ENCODE measurements at regions of chr17 and their contacts with region 1.

Region 1: DNA sequence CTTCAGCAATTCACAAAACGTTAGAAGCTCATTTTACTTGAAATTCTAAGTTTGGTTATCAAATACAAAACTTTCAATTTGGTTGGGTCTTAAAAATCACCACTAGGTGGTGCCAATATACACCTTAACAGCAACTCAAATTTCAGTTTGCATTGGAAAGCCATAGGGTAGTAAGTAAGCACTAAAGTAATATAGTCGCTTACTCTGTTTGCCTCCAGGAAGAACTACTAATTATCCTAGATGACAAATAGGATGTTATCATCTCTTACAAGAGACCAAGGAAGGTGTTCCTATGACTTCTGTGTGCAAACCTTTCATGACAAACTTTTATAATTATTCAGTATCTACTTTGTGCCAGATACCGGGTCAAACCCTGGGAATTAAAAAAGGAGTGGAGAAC is 93.3 kb downstream of the MYO1D start:
- DNase-seq: no peak
- H3K4me3 ChIP-seq: no peak overlapping the region
- H3K27ac ChIP-seq: peak overlapping the region; percentile 27 to 35
- H3K4me1 ChIP-seq: peaks cover 0 to 7% of the 10 kb centered on the region in 2 donors
- H3K27me3 ChIP-seq: no peaks in the 10 kb centered on the region
- CTCF ChIP-seq: peak; percentile 65 to 73 (median 67)

Region 2: GRCh38 chr17:31935512-31935911 is 848.1 kb before region 1 on chr17:
- intact Hi-C with region 1: no loop called
- DNase-seq: no peak
- H3K4me3 ChIP-seq: no peak overlapping the region
- H3K27ac ChIP-seq: no peak overlapping the region
- H3K4me1 ChIP-seq: peaks cover 0 to 12% of the 10 kb centered on the region in 2 donors
- H3K27me3 ChIP-seq: no peaks in the 10 kb centered on the region
- CTCF ChIP-seq: no peak

Region 3: GRCh38 chr17:32807577-32807976 is 24.0 kb after region 1 on chr17:
- intact Hi-C with region 1: no loop called
- DNase-seq: no peak
- H3K4me3 ChIP-seq: no peak overlapping the region
- H3K27ac ChIP-seq: peak overlapping the region in 1 of 2 donors; percentile 16
- H3K4me1 ChIP-seq: peaks cover 8 to 34% of the 10 kb centered on the region in 2 donors
- H3K27me3 ChIP-seq: no peaks in the 10 kb centered on the region
- CTCF ChIP-seq: no peak

Region 4: GRCh38 chr17:32822996-32823395 is 39.4 kb after region 1 on chr17:
- intact Hi-C with region 1: loop called (anchors 5 kb)
- DNase-seq: no peak
- H3K4me3 ChIP-seq: peak overlapping the region; percentile 51 to 64
- H3K27ac ChIP-seq: peak overlapping the region; percentile 77 to 84
- H3K4me1 ChIP-seq: peaks cover 0 to 55% of the 10 kb centered on the region in 2 donors
- H3K27me3 ChIP-seq: no peaks in the 10 kb centered on the region
- CTCF ChIP-seq: no peak

Region 5: GRCh38 chr17:32909787-32910369 is 126.3 kb after region 1 on chr17:
- intact Hi-C with region 1: loop called (anchors 1 kb)
- DNase-seq: peak in 1 of 2 donors; percentile 93
- H3K4me3 ChIP-seq: no peak overlapping the region
- H3K27ac ChIP-seq: peak overlapping the region in 1 of 2 donors; percentile 13
- H3K4me1 ChIP-seq: peaks cover 0 to 12% of the 10 kb centered on the region in 2 donors
- H3K27me3 ChIP-seq: no peaks in the 10 kb centered on the region
- CTCF ChIP-seq: peak; percentile 66 to 86 (median 79)

Region 6: DNA sequence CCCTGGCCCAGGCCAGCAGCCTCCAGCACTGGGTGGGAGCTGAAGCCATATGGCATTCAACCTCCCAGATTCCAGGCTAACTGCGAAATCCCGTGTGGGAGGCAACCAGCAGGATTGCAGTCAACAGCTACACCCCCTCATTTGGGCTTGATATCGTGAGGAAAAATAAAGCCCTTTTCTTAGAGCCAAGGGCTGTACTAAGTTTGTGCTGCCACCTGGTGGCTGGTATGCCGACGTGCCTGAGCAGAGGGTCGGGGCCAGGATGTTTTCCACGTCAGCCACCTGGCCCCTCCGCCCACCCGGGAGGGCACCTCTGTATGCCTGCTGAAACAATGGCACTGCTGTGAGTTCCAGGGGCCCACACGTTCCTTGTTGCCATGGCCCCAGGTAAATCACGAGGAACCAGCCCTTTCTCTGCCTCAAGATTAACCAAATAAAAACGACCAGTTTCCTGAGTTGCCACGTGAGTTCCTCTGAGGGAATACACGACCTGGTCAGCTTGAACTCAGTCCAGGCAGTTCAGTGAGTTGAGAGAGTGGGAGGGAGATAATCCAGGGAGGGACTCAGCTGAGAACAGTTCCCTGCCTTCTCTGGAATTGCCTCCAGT is 153.4 kb after region 1 on chr17:
- intact Hi-C with region 1: loop called (anchors 1 kb)
- DNase-seq: peak in 1 of 2 donors; percentile 86
- H3K4me3 ChIP-seq: no peak overlapping the region
- H3K27ac ChIP-seq: peak overlapping the region; percentile 20 to 63
- H3K4me1 ChIP-seq: peaks cover 0 to 9% of the 10 kb centered on the region in 2 donors
- H3K27me3 ChIP-seq: no peaks in the 10 kb centered on the region
- CTCF ChIP-seq: peak; percentile 76 to 86 (median 85)